Right cardiac atrium (tissue), 5 donors: ENCODE measurements at regions of chr3 and their contacts with region 1.

Region 1: DNA sequence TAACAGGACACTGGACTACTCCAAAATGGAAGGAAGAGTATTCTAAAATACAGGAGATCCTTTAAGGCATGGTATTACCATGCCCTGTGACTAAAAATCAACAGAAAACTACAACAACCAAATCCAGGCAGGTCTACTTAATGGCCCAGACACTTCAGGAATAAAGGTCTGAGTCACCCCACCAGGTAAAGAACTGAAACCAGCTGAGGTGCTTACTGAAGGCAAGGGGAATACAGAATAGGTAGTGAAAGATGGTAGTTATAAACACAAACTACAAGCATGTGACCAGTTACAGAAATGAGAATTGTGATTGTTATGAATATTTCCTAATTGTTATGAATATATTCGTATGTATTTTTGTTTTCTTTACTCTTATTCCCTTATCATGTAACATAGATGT is 13.4 kb downstream of the IFT57 start:
- DNase-seq: no peak
- ATAC-seq: no peak
- H3K4me3 ChIP-seq: no peak overlapping the region
- H3K27ac ChIP-seq: no peak overlapping the region
- H3K4me1 ChIP-seq: no peaks in the 10 kb centered on the region
- H3K27me3 ChIP-seq: no peaks in the 10 kb centered on the region

Region 2: GRCh38 chr3:108017587-108017986 is 191.2 kb before region 1 on chr3:
- intact Hi-C with region 1: no loop called
- DNase-seq: no peak
- ATAC-seq: no peak
- H3K4me3 ChIP-seq: no peak overlapping the region
- H3K27ac ChIP-seq: no peak overlapping the region
- H3K4me1 ChIP-seq: no peaks in the 10 kb centered on the region
- H3K27me3 ChIP-seq: no peaks in the 10 kb centered on the region

Region 3: DNA sequence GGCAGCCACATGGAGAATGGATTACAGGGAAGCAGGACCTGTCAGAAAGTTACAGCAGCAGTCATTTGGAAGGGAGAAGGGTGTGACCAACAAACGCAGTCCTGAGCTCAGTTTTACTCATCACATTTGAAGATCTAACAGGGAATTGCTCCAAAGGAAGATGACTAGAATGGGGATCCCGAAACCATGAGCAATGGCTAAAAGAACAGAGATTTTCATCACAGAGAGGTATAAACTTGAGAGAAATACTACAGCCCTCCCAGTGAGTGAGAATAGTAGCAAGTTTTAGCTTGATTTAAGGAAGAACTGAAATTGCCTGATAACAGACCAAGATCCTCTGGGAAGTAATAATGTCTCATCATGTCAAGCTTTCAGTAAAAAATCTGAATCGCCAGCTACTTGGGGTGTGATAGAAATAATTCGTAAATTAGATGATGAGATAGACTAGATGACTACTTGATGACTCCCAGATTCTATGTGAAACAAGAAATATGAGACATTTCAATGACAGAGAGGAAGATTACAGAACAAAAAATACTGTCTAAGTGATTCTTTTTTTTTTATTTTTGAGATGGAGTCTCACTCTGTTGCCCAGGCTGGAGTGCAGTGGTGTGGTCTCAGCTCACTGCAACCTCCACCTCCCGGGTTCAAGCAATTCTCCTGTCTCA is 134.9 kb before region 1 on chr3:
- intact Hi-C with region 1: loop called in 1 of 4 experiments (anchors 10 kb)
- DNase-seq: no peak
- ATAC-seq: no peak
- H3K4me3 ChIP-seq: no peak overlapping the region
- H3K27ac ChIP-seq: no peak overlapping the region
- H3K4me1 ChIP-seq: no peaks in the 10 kb centered on the region
- H3K27me3 ChIP-seq: no peaks in the 10 kb centered on the region

Region 4: DNA sequence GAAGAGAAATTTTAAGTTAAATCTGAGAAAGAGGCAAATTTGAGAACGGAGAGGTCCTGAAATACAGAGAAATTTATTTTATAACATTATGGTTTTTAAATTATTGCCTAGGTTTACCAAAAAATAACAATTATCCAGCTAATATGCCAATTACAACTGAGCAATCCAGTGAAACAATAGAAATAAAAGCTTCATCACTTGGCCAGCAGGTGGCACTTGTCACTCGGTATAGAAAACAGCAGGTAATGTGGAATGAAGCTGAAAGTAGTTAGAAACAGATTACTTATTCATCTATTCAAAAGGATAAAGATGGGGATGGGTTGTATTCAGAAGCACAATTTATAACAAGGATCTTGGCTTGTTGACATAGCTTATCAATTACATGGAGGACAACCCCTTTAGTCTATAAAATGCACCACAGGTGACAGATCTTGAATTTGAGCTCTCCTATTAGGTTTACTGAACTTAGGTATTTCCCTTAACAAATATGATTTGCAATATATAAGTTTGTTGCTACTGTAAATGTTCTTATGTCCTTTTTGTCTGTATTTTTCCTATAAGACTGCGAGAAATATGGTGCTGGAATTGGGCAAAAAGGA is 814.9 kb after region 1 on chr3:
- intact Hi-C with region 1: no loop called
- DNase-seq: peak in 2 of 3 donors; percentile 17 to 42
- ATAC-seq: no peak
- H3K4me3 ChIP-seq: no peak overlapping the region
- H3K27ac ChIP-seq: no peak overlapping the region
- H3K4me1 ChIP-seq: no peaks in the 10 kb centered on the region
- H3K27me3 ChIP-seq: no peaks in the 10 kb centered on the region